Activated naive CD4-positive, alpha-beta T cell treated with anti-CD3 and anti-CD28 coated beads for 36 hours (primary cell): ENCODE measurements at regions of chr4 and their contacts with region 1.

Region 1: DNA sequence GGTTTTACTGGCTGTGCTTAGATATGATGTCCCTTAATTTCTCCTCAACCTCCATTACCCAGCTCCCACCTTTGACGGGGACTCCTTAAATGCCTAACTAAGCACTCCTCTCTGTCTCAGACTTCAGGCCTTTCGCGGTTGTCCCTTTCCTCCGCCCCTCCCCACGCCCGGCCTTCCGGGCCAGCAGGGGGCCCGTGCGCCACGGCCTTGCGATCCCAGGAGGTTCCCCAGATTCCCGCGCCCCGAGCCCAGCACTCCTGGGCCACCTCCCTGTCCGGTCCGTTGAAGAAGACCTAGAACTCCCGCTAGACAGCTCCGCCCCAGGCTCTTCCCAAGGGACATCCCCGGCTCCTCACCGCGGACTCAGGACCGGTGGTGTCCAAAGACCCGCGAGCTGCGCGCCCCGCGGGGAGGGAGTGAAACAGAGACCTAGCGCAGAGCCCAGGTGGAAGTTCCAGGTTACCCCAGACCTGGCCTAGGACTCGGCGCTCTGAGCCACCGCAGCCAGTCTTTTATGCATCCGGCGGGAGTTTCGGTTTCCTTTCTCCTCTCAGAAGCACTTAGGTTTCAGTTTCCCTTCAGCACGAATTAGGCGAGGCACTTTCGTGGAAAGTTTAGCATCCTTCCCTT is at the start of gene DDX60:
- DNase-seq: peak; percentile 90
- H3K4me3 Mint-ChIP-seq: peak within 1 kb of the TSS; percentile 85
- H3K27ac Mint-ChIP-seq: peak within 1 kb of the TSS; percentile 89
- H3K4me1 Mint-ChIP-seq: peaks cover 31% of the 10 kb centered on the region
- H3K27me3 Mint-ChIP-seq: no peaks in the 10 kb centered on the region
- total RNA-seq, gene DDX60: 26.8 to 28.2 TPM

Region 2: DNA sequence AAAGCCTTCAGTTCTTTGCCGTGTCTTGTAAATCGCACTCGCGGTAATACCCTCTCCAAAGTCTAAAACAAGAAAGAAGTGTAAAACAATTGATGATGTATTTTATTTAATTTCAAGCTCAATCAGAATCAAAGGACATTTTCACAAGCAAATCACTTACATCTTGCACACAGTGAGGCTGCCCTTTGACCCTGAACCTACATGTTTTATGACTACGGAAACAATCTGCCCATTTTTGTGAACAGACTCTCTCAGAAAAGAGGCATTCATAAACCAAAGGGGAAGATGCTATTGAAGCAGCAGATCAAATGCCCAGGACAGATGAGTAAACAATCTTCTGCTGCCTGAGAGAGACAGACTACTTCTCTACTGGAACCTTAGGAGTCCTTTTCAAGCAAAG is 76.2 kb after region 1 on chr4:
- CTCF ChIA-PET with region 1: no interaction called
- intact Hi-C with region 1: loop called (anchors 2 kb)
- DNase-seq: no peak
- H3K4me3 Mint-ChIP-seq: no peak overlapping the region
- H3K27ac Mint-ChIP-seq: no peak overlapping the region
- H3K4me1 Mint-ChIP-seq: peaks cover 3% of the 10 kb centered on the region
- H3K27me3 Mint-ChIP-seq: no peaks in the 10 kb centered on the region

Region 3: DNA sequence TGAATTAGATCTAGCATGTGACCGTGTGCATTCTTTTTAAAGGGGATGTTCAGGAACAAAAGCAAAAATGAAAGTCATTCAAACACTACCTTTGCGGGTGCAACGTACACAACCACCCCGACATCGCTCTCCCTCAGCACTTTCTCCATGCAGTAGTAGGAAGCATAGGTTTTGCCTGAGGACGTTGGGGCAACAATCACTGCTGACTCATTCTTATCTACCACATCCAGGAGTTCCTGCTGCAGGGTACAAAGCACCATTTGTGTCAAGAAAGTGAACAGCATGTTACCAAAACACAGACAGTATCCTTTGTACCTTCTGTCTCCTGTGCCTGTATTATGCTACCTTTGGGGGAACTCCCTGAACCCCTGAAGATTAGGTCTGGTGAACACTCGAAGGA is 103.3 kb after region 1 on chr4:
- CTCF ChIA-PET with region 1: no interaction called
- intact Hi-C with region 1: loop called (anchors 2 kb)
- DNase-seq: peak; percentile 30
- H3K4me3 Mint-ChIP-seq: peak overlapping the region; percentile 27
- H3K27ac Mint-ChIP-seq: peak overlapping the region; percentile 52
- H3K4me1 Mint-ChIP-seq: peaks cover 12% of the 10 kb centered on the region
- H3K27me3 Mint-ChIP-seq: no peaks in the 10 kb centered on the region

Region 4: DNA sequence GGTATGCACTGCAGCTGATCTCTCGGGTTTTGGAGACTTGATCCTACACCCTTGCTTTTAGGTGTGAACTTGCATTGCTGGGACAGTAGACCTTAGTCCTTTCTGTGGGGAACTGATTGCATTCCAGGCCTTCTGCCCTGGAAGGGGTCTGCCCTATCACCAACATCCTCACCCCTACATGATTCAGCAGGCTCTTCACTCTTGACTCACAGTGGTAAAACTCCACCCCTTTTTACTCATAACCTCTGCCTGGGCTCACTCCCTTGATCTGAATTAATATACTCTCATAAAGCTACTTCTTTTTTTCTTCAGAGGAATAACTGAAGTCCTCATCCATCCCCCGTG is 168.6 kb after region 1 on chr4:
- CTCF ChIA-PET with region 1: no interaction called
- intact Hi-C with region 1: loop called (anchors 1 kb)
- DNase-seq: peak; percentile 37
- H3K4me3 Mint-ChIP-seq: no peak overlapping the region
- H3K27ac Mint-ChIP-seq: no peak overlapping the region
- H3K4me1 Mint-ChIP-seq: peaks cover 39% of the 10 kb centered on the region
- H3K27me3 Mint-ChIP-seq: no peaks in the 10 kb centered on the region